IMR-90 (cell line): ENCODE measurements at regions of chr9 and their contacts with region 1.

Region 1: GRCh38 chr9:121557581-121558447 is 58.2 kb upstream of the GGTA1 start:
- DNase-seq: peak; percentile 92
- ATAC-seq: peak; percentile 82
- H3K4me3 ChIP-seq: no peak overlapping the region
- H3K27ac ChIP-seq: peak overlapping the region; percentile 49
- H3K4me1 ChIP-seq: peaks cover 18% of the 10 kb centered on the region
- H3K27me3 ChIP-seq: peaks cover 12% of the 10 kb centered on the region
- CTCF ChIP-seq: no peak
- POLR2A ChIP-seq: no peak
- RAD21 ChIP-seq: no peak

Region 2: GRCh38 chr9:121519046-121519445 is 38.8 kb before region 1 on chr9:
- CTCF ChIA-PET with region 1: no interaction called
- POLR2A ChIA-PET with region 1: no interaction called
- dilution Hi-C with region 1: no loop called
- in situ Hi-C with region 1: no loop called
- intact Hi-C with region 1: no loop called
- DNase-seq: no peak
- ATAC-seq: no peak
- H3K4me3 ChIP-seq: no peak overlapping the region
- H3K27ac ChIP-seq: no peak overlapping the region
- H3K4me1 ChIP-seq: no peaks in the 10 kb centered on the region
- H3K27me3 ChIP-seq: peaks cover 31% of the 10 kb centered on the region
- CTCF ChIP-seq: no peak
- POLR2A ChIP-seq: no peak
- RAD21 ChIP-seq: no peak

Region 3: DNA sequence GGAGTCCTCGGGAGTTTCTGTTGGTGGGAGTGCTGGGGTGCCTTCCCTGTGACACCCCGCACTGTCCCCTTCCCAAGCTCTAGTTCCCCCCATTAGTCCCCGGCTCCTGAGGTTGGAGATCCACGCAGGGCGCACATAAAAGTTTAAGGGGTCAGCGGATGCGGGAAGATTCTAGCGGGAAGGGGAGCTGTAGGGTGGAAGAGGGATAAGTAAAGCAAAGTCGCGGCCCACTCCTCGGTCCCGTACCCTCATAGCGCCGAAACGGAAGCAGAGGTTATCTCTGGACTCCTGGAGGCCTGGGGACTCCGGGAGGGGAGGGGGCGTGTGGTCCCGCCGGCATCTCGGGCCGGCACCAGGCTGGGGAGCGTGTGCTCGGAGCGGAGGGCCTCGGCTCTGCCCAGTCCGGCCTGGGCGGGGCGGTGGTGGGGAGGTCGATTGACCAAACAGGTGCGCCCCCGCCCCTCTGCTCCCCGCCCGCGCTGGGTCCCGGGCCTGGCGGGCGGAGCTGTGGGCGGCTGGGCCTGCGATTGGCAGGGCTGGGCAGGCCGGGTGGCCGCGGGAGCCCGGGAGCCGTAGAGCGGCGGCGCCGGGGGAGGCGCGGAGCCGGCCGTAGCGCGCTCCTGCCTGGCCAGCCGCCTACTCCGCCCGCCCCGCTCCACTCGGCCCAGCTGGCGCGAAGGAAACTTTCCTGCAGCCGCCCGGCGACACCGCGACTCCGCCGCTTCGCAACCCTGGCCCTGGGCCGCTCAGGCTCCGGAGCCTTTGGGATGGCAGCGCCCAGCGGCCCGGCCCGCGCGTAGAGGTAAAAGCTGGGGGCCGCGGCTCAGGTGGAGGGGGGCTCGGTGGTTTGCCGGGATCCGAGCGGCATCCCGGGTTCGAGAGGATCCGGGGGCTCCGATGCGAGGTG is 41.4 kb after region 1 on chr9:
- CTCF ChIA-PET with region 1: interaction called, 4 read pairs
- POLR2A ChIA-PET with region 1: no interaction called
- dilution Hi-C with region 1: no loop called
- in situ Hi-C with region 1: no loop called
- intact Hi-C with region 1: loop called (anchors 2 kb)
- DNase-seq: peak; percentile 26
- ATAC-seq: peak; percentile 76
- H3K4me3 ChIP-seq: peak overlapping the region; percentile 38
- H3K27ac ChIP-seq: peak overlapping the region; percentile 28; the same call in 1 of the 2 replicates
- H3K4me1 ChIP-seq: peaks cover 25% of the 10 kb centered on the region
- H3K27me3 ChIP-seq: peaks cover 3% of the 10 kb centered on the region; the same call in 1 of the 2 replicates
- CTCF ChIP-seq: no peak
- POLR2A ChIP-seq: no peak
- RAD21 ChIP-seq: no peak